OCI-LY7 (cell line): ENCODE measurements at regions of chr10 and their contacts with region 1.

Region 1: GRCh38 chr10:75235375-75236177 is at the start of gene COMTD1:
- DNase-seq: peak; percentile 95
- H3K4me3 ChIP-seq: peak within 1 kb of the TSS; percentile 80
- H3K27ac ChIP-seq: peak within 1 kb of the TSS; percentile 77
- H3K4me1 ChIP-seq: peaks cover 19% of the 10 kb centered on the region
- CTCF ChIP-seq: peak; percentile 99
- total RNA-seq, gene COMTD1: 20.7 and 37.7 TPM in 2 replicates

Region 2: GRCh38 chr10:74738985-74739567 is 496.5 kb before region 1 on chr10:
- CTCF ChIA-PET with region 1: no interaction called
- POLR2A ChIA-PET with region 1: interaction called, 3 read pairs
- intact Hi-C with region 1: loop called (anchors 1 kb)
- DNase-seq: peak; percentile 85
- H3K4me3 ChIP-seq: peak overlapping the region; percentile 29
- H3K27ac ChIP-seq: peak overlapping the region; percentile 55
- H3K4me1 ChIP-seq: peaks cover 24% of the 10 kb centered on the region
- CTCF ChIP-seq: peak; percentile 69

Region 3: DNA sequence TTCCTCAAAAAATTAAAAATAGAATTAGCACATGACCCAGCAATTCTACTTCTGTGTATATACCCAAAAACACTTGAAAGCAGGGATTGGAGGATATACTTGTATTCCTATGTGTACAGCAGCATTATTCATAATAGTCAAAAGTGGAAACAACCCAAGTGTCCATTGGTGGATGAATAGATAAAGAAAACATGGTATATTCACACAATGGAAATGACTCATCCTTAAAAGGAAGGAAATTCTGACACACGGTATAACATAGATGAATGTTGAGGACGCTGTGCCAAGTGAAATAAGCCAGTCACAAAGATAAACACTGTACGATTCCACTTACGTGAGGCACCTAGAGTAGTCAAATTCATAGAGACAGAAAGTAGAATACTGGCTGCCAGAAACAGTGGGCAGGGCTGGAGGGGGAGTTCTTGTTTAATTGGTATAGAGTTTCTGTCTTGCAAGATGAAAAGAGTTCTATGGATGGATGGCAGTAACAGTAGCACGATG is 435.8 kb before region 1 on chr10:
- CTCF ChIA-PET with region 1: no interaction called
- POLR2A ChIA-PET with region 1: no interaction called
- intact Hi-C with region 1: no loop called
- DNase-seq: no peak
- H3K4me3 ChIP-seq: no peak overlapping the region
- H3K27ac ChIP-seq: no peak overlapping the region
- H3K4me1 ChIP-seq: peaks cover 39% of the 10 kb centered on the region
- CTCF ChIP-seq: no peak

Region 4: GRCh38 chr10:75001715-75002350 is 233.7 kb before region 1 on chr10:
- CTCF ChIA-PET with region 1: no interaction called
- POLR2A ChIA-PET with region 1: no interaction called
- intact Hi-C with region 1: no loop called
- DNase-seq: no peak
- H3K4me3 ChIP-seq: no peak overlapping the region
- H3K27ac ChIP-seq: no peak overlapping the region
- H3K4me1 ChIP-seq: peaks cover 13% of the 10 kb centered on the region
- CTCF ChIP-seq: no peak

Region 5: DNA sequence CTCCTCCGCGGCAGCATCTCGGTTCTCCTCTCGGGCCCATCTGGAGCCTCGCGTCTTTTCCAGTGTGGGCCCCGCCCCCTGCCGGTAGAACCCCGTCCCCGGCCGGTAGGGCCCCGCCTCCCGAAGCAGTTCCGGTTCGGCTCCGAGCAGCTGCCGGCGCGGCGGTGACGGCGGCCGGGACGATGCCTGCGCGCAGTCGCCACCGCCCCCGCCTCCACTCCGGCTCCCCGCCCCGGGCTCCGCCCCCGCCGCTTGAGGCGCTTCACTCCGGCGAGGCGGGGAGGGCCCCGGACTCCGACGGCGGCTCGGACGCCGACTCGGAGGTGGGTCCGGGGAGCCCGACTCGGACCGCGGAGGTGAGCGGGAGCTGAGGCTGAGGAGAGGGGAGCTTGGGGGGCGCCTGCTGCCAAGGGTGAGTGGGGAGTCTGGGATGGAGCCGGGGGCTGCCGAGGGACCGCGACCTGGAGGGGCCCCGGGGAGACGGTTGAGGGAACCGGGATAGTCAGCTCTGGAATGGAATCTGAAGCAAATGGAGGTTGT is 124.1 kb before region 1 on chr10 and contains the start of gene SAMD8:
- CTCF ChIA-PET with region 1: no interaction called
- POLR2A ChIA-PET with region 1: no interaction called
- intact Hi-C with region 1: loop called (anchors 1 kb)
- DNase-seq: peak; percentile 96
- H3K4me3 ChIP-seq: peak within 1 kb of the TSS; percentile 93
- H3K27ac ChIP-seq: peak within 1 kb of the TSS; percentile 93
- H3K4me1 ChIP-seq: peaks cover 20% of the 10 kb centered on the region
- CTCF ChIP-seq: peak; percentile 43
- total RNA-seq, gene SAMD8: 8.3 and 8.8 TPM in 2 replicates

Region 6: DNA sequence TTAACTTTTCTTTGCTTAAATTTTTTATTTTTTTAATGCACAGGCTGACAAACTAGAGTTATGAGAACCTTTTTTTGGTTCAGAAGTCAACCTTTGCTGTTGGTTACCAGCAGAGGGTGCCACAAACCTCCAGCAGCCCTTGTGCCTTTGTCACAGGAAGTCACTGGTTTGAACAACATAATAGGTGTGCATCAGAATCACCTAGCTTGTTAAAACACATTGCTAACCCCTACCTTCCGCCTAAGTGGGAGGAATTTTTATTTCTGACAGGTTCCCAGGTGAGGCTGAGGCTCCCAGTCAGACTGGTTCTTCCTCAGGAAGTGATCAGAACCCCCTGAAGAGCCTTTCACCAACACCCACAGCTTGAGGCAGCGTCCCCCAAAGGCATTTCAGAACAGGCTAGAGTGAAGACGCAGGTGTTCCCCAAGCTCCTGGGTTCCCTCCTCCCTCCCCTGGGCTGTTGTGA is 47.6 kb before region 1 on chr10:
- CTCF ChIA-PET with region 1: interaction called, 8 read pairs
- POLR2A ChIA-PET with region 1: interaction called, 5 read pairs
- intact Hi-C with region 1: loop called (anchors 1 kb)
- DNase-seq: peak; percentile 77
- H3K4me3 ChIP-seq: no peak overlapping the region
- H3K27ac ChIP-seq: no peak overlapping the region
- H3K4me1 ChIP-seq: peaks cover 4% of the 10 kb centered on the region
- CTCF ChIP-seq: peak; percentile 85

Region 7: DNA sequence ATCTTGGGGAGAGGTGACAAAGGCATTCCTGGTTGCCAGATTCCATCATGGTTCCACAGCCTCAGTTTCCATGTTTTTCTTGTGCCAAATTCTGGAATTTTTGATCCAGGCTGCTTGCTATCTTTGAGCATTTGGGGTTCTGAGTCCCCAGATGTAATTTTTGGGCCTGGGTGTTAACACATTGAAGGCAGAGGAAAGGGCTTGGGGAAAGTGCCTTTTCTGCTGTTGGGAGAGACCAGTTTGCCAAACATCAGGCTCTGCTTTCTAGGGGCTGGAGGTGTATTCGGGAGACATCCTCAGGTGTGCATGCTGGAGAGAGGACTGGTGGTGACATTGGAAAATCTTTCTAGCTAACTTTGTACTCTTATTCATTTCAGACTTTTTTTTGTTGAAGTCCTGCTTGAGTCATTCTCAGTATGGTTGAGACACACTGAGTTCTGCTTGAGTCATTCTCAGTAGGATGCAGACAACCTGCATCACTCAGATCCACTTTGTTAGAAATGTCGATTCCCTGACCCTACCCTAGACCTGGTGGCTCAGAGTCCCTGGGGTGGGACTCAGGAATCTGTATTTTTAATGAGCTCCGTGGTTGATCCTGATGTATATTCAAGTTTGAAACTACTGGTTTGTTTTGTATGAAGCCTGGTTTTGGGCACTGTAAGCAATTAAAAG is 296.8 kb after region 1 on chr10:
- CTCF ChIA-PET with region 1: no interaction called
- POLR2A ChIA-PET with region 1: no interaction called
- intact Hi-C with region 1: no loop called
- DNase-seq: no peak
- H3K4me3 ChIP-seq: no peak overlapping the region
- H3K27ac ChIP-seq: no peak overlapping the region
- H3K4me1 ChIP-seq: no peaks in the 10 kb centered on the region
- CTCF ChIP-seq: no peak

Region 8: DNA sequence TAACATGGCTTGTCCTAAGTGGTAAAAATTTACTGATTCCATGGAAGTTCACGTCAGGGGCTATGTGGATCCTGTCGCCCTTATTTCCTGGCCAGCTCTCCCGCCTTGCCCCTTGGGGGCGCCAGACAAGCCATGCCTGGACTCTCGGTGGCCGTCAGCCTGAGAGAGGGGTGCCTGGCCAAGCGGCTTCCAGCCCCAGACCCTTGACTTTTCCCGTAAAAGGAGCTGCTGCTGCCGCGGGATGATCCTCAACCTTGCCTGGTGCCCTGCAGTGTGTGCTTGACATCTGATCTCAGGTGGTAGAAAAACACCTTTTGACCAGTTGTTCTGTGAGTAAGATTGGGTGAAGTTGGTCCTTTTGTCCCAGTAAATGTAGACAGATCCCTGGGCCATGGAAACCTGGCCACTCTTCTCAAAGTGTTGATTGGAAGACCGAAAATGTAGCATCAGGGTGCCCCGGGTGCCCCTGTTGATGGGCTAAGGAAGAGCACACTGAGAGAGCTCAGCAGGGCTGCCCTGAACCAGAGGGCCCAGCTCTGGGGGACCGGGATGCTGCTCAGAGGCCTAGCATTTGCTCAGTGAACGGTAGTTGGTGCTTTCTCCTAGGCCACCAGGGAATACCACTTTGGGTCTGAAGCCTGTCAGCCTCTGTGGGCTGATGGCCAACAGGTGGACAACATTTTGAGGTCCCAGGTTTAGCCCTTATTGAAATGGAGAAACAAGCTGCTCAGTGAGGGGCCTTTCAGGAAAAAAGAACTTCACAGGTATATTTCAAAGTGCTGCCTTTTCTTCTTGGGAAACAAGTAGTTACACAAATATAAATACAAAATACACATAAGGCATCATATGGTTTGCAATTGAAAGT is 358.3 kb after region 1 on chr10:
- CTCF ChIA-PET with region 1: no interaction called
- POLR2A ChIA-PET with region 1: no interaction called
- intact Hi-C with region 1: no loop called
- DNase-seq: no peak
- H3K4me3 ChIP-seq: no peak overlapping the region
- H3K27ac ChIP-seq: no peak overlapping the region
- H3K4me1 ChIP-seq: no peaks in the 10 kb centered on the region
- CTCF ChIP-seq: peak; percentile 54; the same call in 1 of the 2 replicates